Activated CD4-positive, alpha-beta T cell treated with anti-CD3 and anti-CD28 coated beads for 36 hours (primary cell): ENCODE measurements at regions of chr3 and their contacts with region 1.

Region 1: GRCh38 chr3:27712136-27713077 is 9.7 kb downstream of the EOMES start:
- DNase-seq: peak; percentile 89
- ATAC-seq: peak; percentile 94
- H3K4me3 Mint-ChIP-seq: peak overlapping the region; percentile 80
- H3K27ac Mint-ChIP-seq: peak overlapping the region; percentile 73
- H3K4me1 Mint-ChIP-seq: peaks cover 23% of the 10 kb centered on the region
- H3K27me3 Mint-ChIP-seq: peaks cover 51% of the 10 kb centered on the region

Region 2: GRCh38 chr3:27728195-27729087 is 16.0 kb after region 1 on chr3:
- CTCF ChIA-PET with region 1: interaction called, 49 read pairs
- POLR2A ChIA-PET with region 1: no interaction called
- intact Hi-C with region 1: loop called (anchors 2 kb)
- DNase-seq: peak; percentile 56
- ATAC-seq: peak; percentile 69
- H3K4me3 Mint-ChIP-seq: peak overlapping the region; percentile 41
- H3K27ac Mint-ChIP-seq: no peak overlapping the region
- H3K4me1 Mint-ChIP-seq: peaks cover 41% of the 10 kb centered on the region
- H3K27me3 Mint-ChIP-seq: peaks cover 79% of the 10 kb centered on the region

Region 3: GRCh38 chr3:28089527-28089897 is 377.1 kb after region 1 on chr3:
- CTCF ChIA-PET with region 1: no interaction called
- POLR2A ChIA-PET with region 1: no interaction called
- intact Hi-C with region 1: loop called in 1 of 2 experiments (anchors 5 kb)
- DNase-seq: no peak
- ATAC-seq: no peak
- H3K4me3 Mint-ChIP-seq: no peak overlapping the region
- H3K27ac Mint-ChIP-seq: no peak overlapping the region
- H3K4me1 Mint-ChIP-seq: no peaks in the 10 kb centered on the region
- H3K27me3 Mint-ChIP-seq: no peaks in the 10 kb centered on the region

Region 4: DNA sequence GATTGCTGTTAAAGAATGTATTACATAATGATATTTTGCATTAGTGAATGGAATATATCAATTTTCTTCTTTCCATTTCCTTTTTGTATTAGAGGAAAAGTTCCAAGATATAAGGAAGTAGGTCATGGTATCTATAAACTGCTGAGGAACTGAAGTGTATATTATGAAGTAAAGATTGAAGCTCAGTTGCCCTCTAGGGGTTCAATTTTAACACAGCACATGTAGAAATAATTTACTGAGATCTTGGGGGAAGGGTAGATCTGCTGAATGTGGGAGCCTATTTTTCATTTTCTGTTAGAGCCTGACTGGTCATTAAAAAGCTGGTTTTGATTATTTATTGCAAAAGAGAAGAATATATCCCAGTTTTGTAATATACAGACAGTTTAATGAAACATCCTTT is 574.2 kb after region 1 on chr3:
- CTCF ChIA-PET with region 1: interaction called, 3 read pairs
- POLR2A ChIA-PET with region 1: no interaction called
- intact Hi-C with region 1: loop called (anchors 1 to 2 kb)
- DNase-seq: no peak
- ATAC-seq: peak; percentile 60
- H3K4me3 Mint-ChIP-seq: no peak overlapping the region
- H3K27ac Mint-ChIP-seq: no peak overlapping the region
- H3K4me1 Mint-ChIP-seq: peaks cover 13% of the 10 kb centered on the region
- H3K27me3 Mint-ChIP-seq: no peaks in the 10 kb centered on the region

Region 5: DNA sequence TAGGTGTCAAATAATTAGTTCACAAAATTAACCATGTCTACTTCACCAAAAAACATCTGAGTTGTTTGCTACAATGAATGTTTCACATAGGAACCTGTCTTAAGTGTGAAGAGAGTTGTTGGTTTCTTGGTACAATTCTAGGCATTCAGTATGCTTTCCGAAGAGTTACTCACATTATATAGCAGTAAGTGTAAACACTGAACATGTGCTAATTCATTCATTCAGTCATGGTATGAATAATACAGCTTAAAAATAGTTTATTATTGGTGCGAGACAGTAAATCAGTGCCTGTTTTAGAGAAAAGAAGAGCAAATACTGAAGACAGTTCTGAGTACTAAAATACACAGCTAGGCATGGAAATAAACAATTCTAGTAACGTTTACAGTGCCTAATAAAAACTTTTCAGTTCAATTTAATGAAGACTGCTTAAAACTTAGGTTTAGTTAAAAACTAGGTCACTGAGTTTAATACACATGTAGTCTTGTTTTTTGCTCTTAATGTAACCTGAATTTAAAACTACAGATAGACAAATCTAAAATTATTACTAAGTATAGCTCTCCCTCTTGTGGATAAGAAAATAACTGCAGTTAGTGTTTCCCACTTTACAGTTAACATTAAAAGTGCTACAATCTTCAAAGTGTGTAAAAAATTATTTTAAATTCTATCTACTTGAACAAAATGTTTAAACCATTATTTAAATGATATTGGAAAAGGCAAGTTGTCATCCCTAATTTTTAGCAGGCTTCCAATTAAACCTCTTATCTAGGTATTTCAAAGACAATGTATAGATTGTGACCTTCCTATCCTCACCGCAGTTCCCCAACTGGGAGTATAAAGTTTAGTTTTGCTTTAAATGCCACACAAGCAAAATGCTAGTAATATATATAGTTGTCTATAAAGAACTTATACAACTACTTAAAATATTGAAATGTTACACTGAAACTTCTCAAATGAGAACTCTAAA is 616.1 kb after region 1 on chr3:
- CTCF ChIA-PET with region 1: interaction called, 42 read pairs
- POLR2A ChIA-PET with region 1: interaction called, 4 read pairs
- intact Hi-C with region 1: loop called (anchors 1 kb)
- DNase-seq: no peak
- ATAC-seq: no peak
- H3K4me3 Mint-ChIP-seq: no peak overlapping the region
- H3K27ac Mint-ChIP-seq: no peak overlapping the region
- H3K4me1 Mint-ChIP-seq: peaks cover 14% of the 10 kb centered on the region
- H3K27me3 Mint-ChIP-seq: no peaks in the 10 kb centered on the region